Calu3 (cell line): ENCODE measurements at regions of chr14 and their contacts with region 1.

Region 1: DNA sequence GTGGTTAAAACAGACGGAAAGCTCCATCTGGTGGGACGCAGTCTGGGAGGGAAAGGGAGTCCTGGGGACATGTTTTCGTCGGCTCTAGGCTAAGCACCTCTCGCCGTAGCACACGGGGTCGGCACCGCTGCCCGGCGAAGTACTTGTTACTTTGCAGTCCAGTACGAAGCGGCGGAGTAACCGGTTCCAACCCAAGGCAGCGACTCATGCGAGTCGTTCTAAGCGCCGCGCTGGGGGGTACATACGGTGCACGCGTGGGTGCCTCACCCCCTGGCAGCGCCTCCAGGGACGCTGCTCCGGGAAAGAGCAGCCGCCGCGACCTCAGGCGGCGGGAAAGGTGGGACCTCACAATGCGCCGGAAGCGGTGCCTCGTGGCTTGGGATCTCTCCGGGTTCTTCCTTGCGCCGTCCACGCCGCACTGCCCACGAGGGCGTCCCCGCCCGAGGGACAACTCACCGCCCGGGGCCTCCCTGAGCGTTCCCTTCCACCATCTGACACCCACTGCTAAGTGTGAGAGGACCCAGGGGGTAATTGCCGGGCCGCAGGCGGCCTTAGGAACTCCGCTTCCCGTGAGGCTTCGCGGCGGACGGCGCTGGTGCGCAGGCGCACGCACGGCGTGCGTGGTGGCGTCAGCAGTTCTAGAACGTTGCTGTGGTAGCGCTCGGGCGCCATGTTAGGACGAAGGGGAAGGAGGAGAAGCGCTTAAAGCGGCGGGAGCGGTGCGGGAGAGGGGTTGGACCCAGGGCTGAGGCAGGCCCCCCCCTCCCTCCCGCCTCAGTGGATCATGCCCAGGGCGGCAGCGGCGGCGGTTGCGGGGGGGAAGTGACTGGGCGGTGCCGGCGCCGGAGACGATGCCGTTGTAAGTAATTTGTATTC is at the start of gene PAPOLA:
- DNase-seq: peak; percentile 94
- H3K4me3 Mint-ChIP-seq: peak within 1 kb of the TSS; percentile 92
- H3K27ac Mint-ChIP-seq: peak within 1 kb of the TSS; percentile 95
- H3K4me1 Mint-ChIP-seq: peaks cover 23% of the 10 kb centered on the region
- H3K27me3 Mint-ChIP-seq: no peaks in the 10 kb centered on the region
- CTCF ChIP-seq: no peak
- total RNA-seq, gene PAPOLA: 198 and 205 TPM in 2 replicates

Region 2: GRCh38 chr14:96409701-96410100 is 92.3 kb before region 1 on chr14:
- CTCF ChIA-PET with region 1: no interaction called
- intact Hi-C with region 1: no loop called
- DNase-seq: no peak
- H3K4me3 Mint-ChIP-seq: no peak overlapping the region
- H3K27ac Mint-ChIP-seq: no peak overlapping the region
- H3K4me1 Mint-ChIP-seq: no peaks in the 10 kb centered on the region
- H3K27me3 Mint-ChIP-seq: no peaks in the 10 kb centered on the region
- CTCF ChIP-seq: no peak

Region 3: DNA sequence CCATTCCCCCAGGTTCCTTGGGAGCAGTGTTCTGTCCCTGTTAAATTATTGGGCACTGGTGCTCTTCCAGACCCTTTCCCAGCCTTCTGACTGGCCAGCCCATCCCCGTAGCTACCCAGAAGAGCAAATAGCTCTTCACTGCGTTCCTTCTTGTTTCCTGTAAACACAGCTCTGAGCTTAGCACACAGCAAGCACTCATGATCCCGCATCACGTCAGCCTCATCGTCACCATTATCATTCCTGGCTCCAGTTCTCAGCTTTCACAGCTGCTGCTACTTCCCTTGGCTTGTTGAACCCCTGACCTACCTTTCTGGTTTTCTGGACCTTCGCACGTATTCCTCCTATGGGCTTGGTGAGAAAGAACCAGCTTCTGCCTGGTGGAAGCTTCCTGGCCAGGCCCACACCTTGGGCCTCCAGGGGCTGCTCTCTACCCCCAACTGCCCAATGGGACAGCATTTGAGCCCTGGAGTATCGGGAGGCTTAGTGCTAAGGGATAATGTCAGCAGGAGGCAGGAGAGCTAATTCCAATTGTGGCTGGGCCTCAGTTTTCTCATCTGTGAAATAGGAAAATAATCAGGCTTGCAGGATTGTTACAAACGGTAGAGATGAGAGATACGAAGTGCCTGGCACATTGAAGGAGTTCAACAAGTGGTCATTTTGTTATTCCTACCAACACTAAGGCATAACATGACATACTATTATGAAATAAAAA is 22.4 kb before region 1 on chr14:
- CTCF ChIA-PET with region 1: interaction called, 10 read pairs
- intact Hi-C with region 1: no loop called
- DNase-seq: no peak
- H3K4me3 Mint-ChIP-seq: no peak overlapping the region
- H3K27ac Mint-ChIP-seq: no peak overlapping the region
- H3K4me1 Mint-ChIP-seq: no peaks in the 10 kb centered on the region
- H3K27me3 Mint-ChIP-seq: peaks cover 10% of the 10 kb centered on the region
- CTCF ChIP-seq: no peak